Naive thymus-derived CD4-positive, alpha-beta T cell (primary cell): ENCODE measurements at regions of chr1 and their contacts with region 1.

Region 1: GRCh38 chr1:68120136-68120791 is 69.8 kb upstream of the DIRAS3 start:
- DNase-seq: peak in 5 of 9 donors; percentile 13 to 22 (median 17)
- ATAC-seq: no peak
- H3K4me3 ChIP-seq: no peak overlapping the region
- H3K4me3 Mint-ChIP-seq: no peak overlapping the region
- H3K27ac ChIP-seq: no peak overlapping the region
- H3K27ac Mint-ChIP-seq: no peak overlapping the region
- H3K4me1 ChIP-seq: no peaks in the 10 kb centered on the region
- H3K4me1 Mint-ChIP-seq: peaks cover 0 to 8% (median 4%) of the 10 kb centered on the region in 7 donors
- H3K27me3 ChIP-seq: no peaks in the 10 kb centered on the region
- H3K27me3 Mint-ChIP-seq: peaks cover 0 to 7% (median 4%) of the 10 kb centered on the region in 5 donors

Region 2: GRCh38 chr1:67535474-67535873 is 584.8 kb before region 1 on chr1:
- CTCF ChIA-PET with region 1: no interaction called
- POLR2A ChIA-PET with region 1: no interaction called
- intact Hi-C with region 1: loop called in 1 of 2 experiments (anchors 10 kb)
- DNase-seq: peak in 4 of 9 donors; percentile 3 to 42 (median 10)
- ATAC-seq: peak; percentile 72
- H3K4me3 ChIP-seq: no peak overlapping the region
- H3K4me3 Mint-ChIP-seq: no peak overlapping the region
- H3K27ac ChIP-seq: no peak overlapping the region
- H3K27ac Mint-ChIP-seq: no peak overlapping the region
- H3K4me1 ChIP-seq: no peaks in the 10 kb centered on the region
- H3K4me1 Mint-ChIP-seq: no peaks in the 10 kb centered on the region
- H3K27me3 ChIP-seq: no peaks in the 10 kb centered on the region
- H3K27me3 Mint-ChIP-seq: peaks cover 0 to 10% (median 0%) of the 10 kb centered on the region in 5 donors

Region 3: DNA sequence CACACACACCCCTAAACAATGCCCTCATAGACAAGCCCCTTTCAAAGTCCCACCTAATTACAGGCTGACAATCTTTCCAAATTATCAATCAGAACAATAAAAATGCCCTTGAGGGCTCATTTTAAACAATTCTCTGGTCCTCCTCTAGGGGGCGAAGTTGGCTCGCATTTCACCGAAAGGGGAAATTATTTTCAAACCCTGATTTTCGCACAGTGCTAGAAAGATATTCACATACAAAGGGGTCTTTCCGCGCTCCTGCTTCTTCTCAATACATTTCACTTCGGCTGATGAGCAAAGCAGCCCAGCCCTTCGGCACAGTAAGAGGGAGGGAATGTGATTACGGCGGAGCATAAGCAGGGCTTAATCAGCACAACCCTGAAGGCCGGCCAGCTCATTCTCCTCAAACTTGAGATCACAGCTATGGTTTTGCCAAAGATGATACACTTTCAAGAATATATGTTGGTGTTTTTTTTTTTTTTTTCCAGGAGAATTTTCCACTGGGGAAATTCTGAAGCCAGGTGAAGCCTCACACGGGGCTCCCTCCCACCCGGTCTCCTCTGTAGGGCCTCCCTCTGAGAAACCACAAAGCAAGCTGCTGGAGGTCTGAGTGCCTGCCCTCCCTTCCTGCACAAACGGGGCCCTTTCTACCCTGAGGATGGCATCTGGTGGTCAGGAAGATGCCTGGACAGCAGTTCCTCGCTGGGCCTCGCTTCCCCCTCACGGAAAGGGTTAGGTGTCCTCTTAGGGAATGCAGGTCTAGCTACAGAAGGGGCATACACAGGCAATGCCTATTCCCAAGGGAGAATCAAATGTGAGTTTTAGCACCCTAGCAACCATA is 353.9 kb before region 1 on chr1:
- CTCF ChIA-PET with region 1: interaction called, 3 read pairs
- POLR2A ChIA-PET with region 1: no interaction called
- intact Hi-C with region 1: loop called in 1 of 2 experiments (anchors 2 kb)
- DNase-seq: peak in 8 of 9 donors; percentile 3 to 52 (median 39)
- ATAC-seq: peak; percentile 69
- H3K4me3 ChIP-seq: no peak overlapping the region
- H3K4me3 Mint-ChIP-seq: peak overlapping the region in 9 of 10 donors; percentile 47 to 80 (median 68)
- H3K27ac ChIP-seq: no peak overlapping the region
- H3K27ac Mint-ChIP-seq: peak overlapping the region in 1 of 9 donors; percentile 11
- H3K4me1 ChIP-seq: peaks cover 0 to 5% of the 10 kb centered on the region in 2 donors
- H3K4me1 Mint-ChIP-seq: peaks cover 0 to 9% (median 6%) of the 10 kb centered on the region in 7 donors
- H3K27me3 ChIP-seq: peaks cover 0 to 11% of the 10 kb centered on the region in 2 donors
- H3K27me3 Mint-ChIP-seq: peaks cover 33 to 59% (median 40%) of the 10 kb centered on the region in 5 donors

Region 4: DNA sequence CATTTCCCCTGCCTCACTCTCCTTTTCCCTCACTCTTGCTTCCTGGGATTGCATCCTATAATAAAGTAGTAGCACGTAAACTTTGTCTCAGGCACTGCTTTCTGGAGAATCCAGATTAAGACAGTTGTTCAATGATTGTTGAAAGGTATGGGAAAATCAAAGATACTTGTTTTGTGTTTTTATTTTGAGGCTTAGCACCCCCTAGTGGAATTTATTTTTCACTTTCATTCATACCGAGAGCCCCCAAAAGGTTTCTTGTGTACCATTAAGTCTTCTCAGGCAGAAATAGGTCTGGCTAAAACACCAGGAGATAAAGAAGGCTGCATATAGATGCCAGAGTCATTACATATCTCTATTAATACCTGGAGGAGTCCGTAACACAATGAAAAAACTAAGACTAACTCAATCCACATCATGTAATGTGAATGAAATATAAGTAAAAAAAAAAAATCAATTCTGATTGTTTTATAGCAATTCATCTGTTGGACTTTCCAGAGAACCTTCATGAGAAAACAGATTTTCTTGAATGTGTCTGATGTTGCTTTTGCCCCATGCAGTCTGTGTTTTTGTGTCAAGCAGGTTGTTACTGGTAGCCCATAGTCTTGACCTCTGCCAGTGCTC is 226.0 kb after region 1 on chr1:
- CTCF ChIA-PET with region 1: no interaction called
- POLR2A ChIA-PET with region 1: no interaction called
- intact Hi-C with region 1: loop called (anchors 1 to 10 kb)
- DNase-seq: no peak
- ATAC-seq: no peak
- H3K4me3 ChIP-seq: no peak overlapping the region
- H3K4me3 Mint-ChIP-seq: no peak overlapping the region
- H3K27ac ChIP-seq: no peak overlapping the region
- H3K27ac Mint-ChIP-seq: no peak overlapping the region
- H3K4me1 ChIP-seq: no peaks in the 10 kb centered on the region
- H3K4me1 Mint-ChIP-seq: no peaks in the 10 kb centered on the region
- H3K27me3 ChIP-seq: no peaks in the 10 kb centered on the region
- H3K27me3 Mint-ChIP-seq: peaks cover 0 to 5% (median 0%) of the 10 kb centered on the region in 5 donors

Region 5: DNA sequence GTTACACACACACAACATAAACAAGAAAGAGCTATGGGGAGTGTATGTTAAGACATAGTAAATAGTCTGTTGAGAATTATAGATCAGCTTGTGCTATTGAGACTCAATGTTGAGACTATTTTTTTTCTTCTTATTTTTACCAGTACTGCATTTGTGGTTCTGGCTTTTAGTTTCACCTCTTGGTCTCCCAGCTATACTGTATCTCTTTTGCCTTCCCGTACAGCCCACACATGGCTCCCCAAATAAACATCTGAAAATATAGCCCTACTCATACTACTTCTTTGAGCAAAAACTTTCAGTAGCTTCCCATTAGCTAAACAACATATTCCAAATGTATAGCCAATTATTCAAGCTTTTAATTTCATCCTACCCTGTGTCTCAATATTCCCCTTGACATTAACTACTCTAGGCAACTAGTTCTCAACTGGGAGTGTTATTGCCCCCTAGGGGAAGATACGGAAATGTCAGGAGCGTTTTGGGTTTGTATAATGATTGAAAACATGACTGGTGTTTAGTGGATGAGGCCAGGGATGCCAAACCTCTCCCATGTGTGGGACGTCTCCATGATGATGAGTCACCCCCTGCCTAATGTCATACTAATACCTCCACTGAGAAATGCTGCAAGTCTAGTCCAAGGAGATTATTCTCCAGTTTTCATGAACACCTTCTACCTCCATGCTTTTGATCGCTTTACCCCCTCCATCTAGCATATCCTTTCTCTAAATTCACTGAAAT is 322.7 kb after region 1 on chr1:
- CTCF ChIA-PET with region 1: no interaction called
- POLR2A ChIA-PET with region 1: no interaction called
- intact Hi-C with region 1: loop called in 1 of 2 experiments (anchors 2 kb)
- DNase-seq: no peak
- ATAC-seq: peak; percentile 63
- H3K4me3 ChIP-seq: no peak overlapping the region
- H3K4me3 Mint-ChIP-seq: no peak overlapping the region
- H3K27ac ChIP-seq: no peak overlapping the region
- H3K27ac Mint-ChIP-seq: no peak overlapping the region
- H3K4me1 ChIP-seq: no peaks in the 10 kb centered on the region
- H3K4me1 Mint-ChIP-seq: peaks cover 0 to 1% (median 0%) of the 10 kb centered on the region in 7 donors
- H3K27me3 ChIP-seq: no peaks in the 10 kb centered on the region
- H3K27me3 Mint-ChIP-seq: peaks cover 0 to 9% (median 6%) of the 10 kb centered on the region in 5 donors

Region 6: DNA sequence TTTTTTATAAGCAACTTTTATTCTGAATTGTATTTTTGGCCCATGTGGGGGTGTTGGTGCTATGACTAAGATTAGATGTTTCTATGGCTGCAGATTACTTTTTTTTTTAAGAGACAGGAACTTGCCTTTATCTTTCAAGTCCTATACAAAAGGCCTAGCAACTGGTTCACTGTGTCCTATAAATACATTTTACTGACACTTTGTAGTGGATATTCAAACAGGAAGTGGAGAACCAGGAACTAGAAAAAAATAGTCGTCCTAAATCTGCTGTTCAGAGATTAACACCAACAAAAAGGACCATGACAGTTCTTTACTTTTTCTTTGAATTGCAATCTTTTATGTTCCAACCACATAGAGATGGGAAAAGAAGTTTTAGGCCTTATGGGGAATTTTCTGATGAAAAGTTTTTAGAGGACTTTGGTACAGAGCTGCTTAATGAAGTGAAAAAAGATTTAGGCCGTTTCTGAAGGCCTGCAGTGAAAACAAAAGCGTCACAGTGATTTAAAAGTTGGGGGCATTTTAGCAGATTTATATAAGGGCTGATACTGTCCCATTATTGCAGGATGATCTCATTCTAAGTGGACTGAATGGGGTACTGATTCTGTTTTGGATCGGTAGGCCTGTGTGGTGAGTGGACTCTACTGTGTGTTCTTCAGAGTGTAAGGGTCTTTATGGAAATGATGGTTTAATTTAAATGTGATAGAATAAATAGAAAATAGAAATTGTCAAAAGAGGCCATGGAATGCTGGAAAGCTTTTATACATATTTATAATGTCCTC is 513.1 kb after region 1 on chr1:
- CTCF ChIA-PET with region 1: no interaction called
- POLR2A ChIA-PET with region 1: no interaction called
- intact Hi-C with region 1: no loop called
- DNase-seq: no peak
- ATAC-seq: no peak
- H3K4me3 ChIP-seq: no peak overlapping the region
- H3K4me3 Mint-ChIP-seq: no peak overlapping the region
- H3K27ac ChIP-seq: no peak overlapping the region
- H3K27ac Mint-ChIP-seq: no peak overlapping the region
- H3K4me1 ChIP-seq: no peaks in the 10 kb centered on the region
- H3K4me1 Mint-ChIP-seq: no peaks in the 10 kb centered on the region
- H3K27me3 ChIP-seq: no peaks in the 10 kb centered on the region
- H3K27me3 Mint-ChIP-seq: no peaks in the 10 kb centered on the region

Region 7: GRCh38 chr1:69737527-69738185 is 1617.4 kb after region 1 on chr1:
- CTCF ChIA-PET with region 1: no interaction called
- POLR2A ChIA-PET with region 1: no interaction called
- intact Hi-C with region 1: loop called in 1 of 2 experiments (anchors 1 kb)
- DNase-seq: peak in 4 of 9 donors; percentile 6 to 15 (median 12)
- ATAC-seq: no peak
- H3K4me3 ChIP-seq: no peak overlapping the region
- H3K4me3 Mint-ChIP-seq: no peak overlapping the region
- H3K27ac ChIP-seq: no peak overlapping the region
- H3K27ac Mint-ChIP-seq: no peak overlapping the region
- H3K4me1 ChIP-seq: no peaks in the 10 kb centered on the region
- H3K4me1 Mint-ChIP-seq: no peaks in the 10 kb centered on the region
- H3K27me3 ChIP-seq: no peaks in the 10 kb centered on the region
- H3K27me3 Mint-ChIP-seq: no peaks in the 10 kb centered on the region